ENCODE measurements at regions of chr9 and their contacts with region 1.

Region 1: GRCh38 chr9:33404788-33405362 is 2.5 kb upstream of the AQP7 start:
- DNase-seq: no peak
- ATAC-seq: no peak
- H3K4me3 ChIP-seq: no peak overlapping the region
- H3K4me3 Mint-ChIP-seq: no peak overlapping the region
- H3K27ac ChIP-seq: no peak overlapping the region
- H3K27ac Mint-ChIP-seq: no peak overlapping the region
- H3K4me1 ChIP-seq: no peaks in the 10 kb centered on the region
- H3K4me1 Mint-ChIP-seq: peaks cover 5% of the 10 kb centered on the region
- H3K27me3 ChIP-seq: no peaks in the 10 kb centered on the region
- H3K27me3 Mint-ChIP-seq: no peaks in the 10 kb centered on the region
- CTCF ChIP-seq: no peak

Region 2: DNA sequence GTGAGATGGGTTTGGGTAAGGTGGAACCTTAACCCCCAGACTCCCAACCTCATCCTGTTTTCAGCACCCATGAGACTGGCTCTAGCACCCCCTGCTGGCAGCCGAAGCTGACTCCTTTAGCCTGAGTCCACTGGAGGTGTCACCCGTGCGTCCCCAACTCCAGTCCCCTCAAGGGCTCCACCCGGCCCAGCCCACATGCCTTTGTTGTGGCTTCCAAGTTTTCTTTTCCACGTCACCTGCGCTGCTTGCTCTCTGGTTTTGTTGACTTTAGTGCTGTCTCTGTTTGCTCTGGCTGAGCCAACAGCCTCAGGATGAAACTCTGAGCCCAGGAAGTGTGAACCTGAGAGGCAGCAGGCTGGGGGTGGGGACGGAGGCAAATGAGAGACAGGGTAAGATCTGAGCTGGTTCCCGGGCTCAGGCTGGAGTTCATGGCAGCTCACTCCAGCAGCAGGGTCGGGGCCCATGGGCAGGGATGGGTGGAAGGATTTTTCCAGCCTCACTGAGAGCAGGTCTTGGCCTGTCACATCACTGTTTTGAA is 10.7 kb after region 1 on chr9:
- CTCF ChIA-PET with region 1: interaction called, 56 read pairs
- POLR2A ChIA-PET with region 1: no interaction called
- intact Hi-C with region 1: loop called (anchors 1 kb)
- DNase-seq: peak; percentile 83 to 97 (median 93)
- ATAC-seq: peak; percentile 88
- H3K4me3 ChIP-seq: peak overlapping the region in 1 of 2 experiments; percentile 7
- H3K4me3 Mint-ChIP-seq: peak overlapping the region; percentile 72
- H3K27ac ChIP-seq: peak overlapping the region; percentile 34 to 41
- H3K27ac Mint-ChIP-seq: peak overlapping the region; percentile 95
- H3K4me1 ChIP-seq: peaks cover 42% of the 10 kb centered on the region
- H3K4me1 Mint-ChIP-seq: peaks cover 50% of the 10 kb centered on the region
- H3K27me3 ChIP-seq: no peaks in the 10 kb centered on the region
- H3K27me3 Mint-ChIP-seq: no peaks in the 10 kb centered on the region
- CTCF ChIP-seq: peak; percentile 63

Region 3: GRCh38 chr9:33446946-33447798 is 42.3 kb after region 1 on chr9 and contains the start of gene AQP3:
- CTCF ChIA-PET with region 1: interaction called, 26 read pairs
- POLR2A ChIA-PET with region 1: interaction called, 4 read pairs
- intact Hi-C with region 1: loop called in 1 of 2 experiments (anchors 1 kb)
- DNase-seq: peak; percentile 49 to 88 (median 76)
- ATAC-seq: peak; percentile 53
- H3K4me3 ChIP-seq: peak within 1 kb of the TSS; percentile 58 to 79
- H3K4me3 Mint-ChIP-seq: peak within 1 kb of the TSS; percentile 95
- H3K27ac ChIP-seq: peak within 1 kb of the TSS; percentile 62 to 81
- H3K27ac Mint-ChIP-seq: peak within 1 kb of the TSS; percentile 96
- H3K4me1 ChIP-seq: peaks cover 39% of the 10 kb centered on the region
- H3K4me1 Mint-ChIP-seq: peaks cover 52% of the 10 kb centered on the region
- H3K27me3 ChIP-seq: no peaks in the 10 kb centered on the region
- H3K27me3 Mint-ChIP-seq: no peaks in the 10 kb centered on the region
- CTCF ChIP-seq: no peak
- total RNA-seq, gene AQP3: 48.0 to 50.3 TPM

Region 4: GRCh38 chr9:33466565-33467495 is 62.0 kb after region 1 on chr9:
- CTCF ChIA-PET with region 1: interaction called, 122 read pairs
- POLR2A ChIA-PET with region 1: interaction called, 10 read pairs
- intact Hi-C with region 1: loop called (anchors 1 kb)
- DNase-seq: peak; percentile 42 to 85 (median 72)
- ATAC-seq: peak; percentile 93
- H3K4me3 ChIP-seq: no peak overlapping the region
- H3K4me3 Mint-ChIP-seq: no peak overlapping the region
- H3K27ac ChIP-seq: no peak overlapping the region
- H3K27ac Mint-ChIP-seq: peak overlapping the region; percentile 22
- H3K4me1 ChIP-seq: peaks cover 5% of the 10 kb centered on the region
- H3K4me1 Mint-ChIP-seq: peaks cover 10% of the 10 kb centered on the region
- H3K27me3 ChIP-seq: no peaks in the 10 kb centered on the region
- H3K27me3 Mint-ChIP-seq: no peaks in the 10 kb centered on the region
- CTCF ChIP-seq: peak; percentile 85

Region 5: DNA sequence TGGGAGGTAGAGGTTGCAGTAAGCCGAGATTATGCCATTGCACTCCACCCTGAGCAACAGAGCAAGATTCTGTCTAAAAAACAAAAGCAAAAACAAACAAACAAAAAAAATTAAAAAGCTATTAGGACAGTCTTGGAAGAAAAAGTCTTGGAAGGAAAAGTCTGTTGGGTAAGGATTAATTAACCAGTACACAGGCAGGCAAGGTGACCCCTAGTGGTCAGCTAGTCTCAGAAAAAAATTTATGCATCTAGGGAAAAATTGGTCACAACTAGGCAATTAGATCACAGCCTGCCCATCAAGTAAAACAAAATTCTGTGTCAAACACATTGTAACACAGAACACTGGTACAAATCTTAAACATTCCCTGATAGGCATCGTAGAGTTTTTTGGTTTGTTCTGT is 112.5 kb after region 1 on chr9:
- CTCF ChIA-PET with region 1: interaction called, 14 read pairs
- POLR2A ChIA-PET with region 1: no interaction called
- intact Hi-C with region 1: no loop called
- DNase-seq: peak in 2 of 9 experiments; percentile 26 to 41
- ATAC-seq: no peak
- H3K4me3 ChIP-seq: no peak overlapping the region
- H3K4me3 Mint-ChIP-seq: no peak overlapping the region
- H3K27ac ChIP-seq: no peak overlapping the region
- H3K27ac Mint-ChIP-seq: no peak overlapping the region
- H3K4me1 ChIP-seq: no peaks in the 10 kb centered on the region
- H3K4me1 Mint-ChIP-seq: no peaks in the 10 kb centered on the region
- H3K27me3 ChIP-seq: no peaks in the 10 kb centered on the region
- H3K27me3 Mint-ChIP-seq: peaks cover 24% of the 10 kb centered on the region
- CTCF ChIP-seq: peak; percentile 40

Region 6: DNA sequence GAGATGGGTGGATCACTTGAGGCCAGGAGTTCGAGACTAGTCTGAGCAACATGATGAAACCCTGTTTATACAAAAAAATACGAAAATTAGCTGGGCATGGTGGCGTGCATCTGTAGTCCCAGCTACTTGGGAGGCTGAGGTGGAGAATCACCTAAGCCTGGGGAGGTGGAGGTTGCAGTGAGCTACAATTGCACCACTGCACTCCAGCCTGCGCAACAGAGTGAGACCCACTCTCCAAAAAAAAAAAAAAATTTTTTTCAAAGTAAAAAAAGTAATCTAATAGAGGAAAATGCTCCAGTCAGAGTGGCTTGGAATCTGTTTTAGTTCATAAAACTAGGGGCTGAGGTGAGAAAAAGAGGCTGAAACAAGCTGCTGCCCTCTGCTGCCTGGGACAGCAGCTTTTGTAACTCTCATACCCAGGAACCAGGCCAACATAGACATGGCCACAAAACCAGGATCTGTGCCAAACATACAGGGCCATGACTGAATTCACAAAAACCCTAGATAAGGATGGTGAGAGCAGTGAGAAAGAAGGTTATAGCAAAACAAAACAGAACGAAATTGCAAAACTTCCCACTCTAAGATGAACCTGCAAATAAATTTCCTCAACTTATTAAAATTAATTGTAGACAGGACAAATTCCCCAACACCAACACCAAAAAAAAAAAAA is 734.7 kb after region 1 on chr9:
- CTCF ChIA-PET with region 1: no interaction called
- POLR2A ChIA-PET with region 1: no interaction called
- intact Hi-C with region 1: no loop called
- DNase-seq: peak in 2 of 9 experiments; percentile 23 to 28
- ATAC-seq: no peak
- H3K4me3 ChIP-seq: no peak overlapping the region
- H3K4me3 Mint-ChIP-seq: no peak overlapping the region
- H3K27ac ChIP-seq: no peak overlapping the region
- H3K27ac Mint-ChIP-seq: no peak overlapping the region
- H3K4me1 ChIP-seq: no peaks in the 10 kb centered on the region
- H3K4me1 Mint-ChIP-seq: peaks cover 6% of the 10 kb centered on the region
- H3K27me3 ChIP-seq: no peaks in the 10 kb centered on the region
- H3K27me3 Mint-ChIP-seq: no peaks in the 10 kb centered on the region
- CTCF ChIP-seq: no peak

Measured in CD8-positive, alpha-beta T cell (primary cell).